ENCODE measurements at regions of chr2 and their contacts with region 1.

Region 1: GRCh38 chr2:218269899-218270720 is at the starts of genes AAMP and PNKD:
- DNase-seq: peak; percentile 100
- H3K4me3 Mint-ChIP-seq: peak within 1 kb of the TSS; percentile 99
- H3K27ac Mint-ChIP-seq: peak within 1 kb of the TSS; percentile 96
- H3K4me1 Mint-ChIP-seq: peaks cover 39% of the 10 kb centered on the region
- H3K27me3 Mint-ChIP-seq: peaks cover 2% of the 10 kb centered on the region
- total RNA-seq, gene AAMP: 85.3 and 89.0 TPM in 2 replicates
- total RNA-seq, gene PNKD: 15.0 and 21.5 TPM in 2 replicates

Region 2: DNA sequence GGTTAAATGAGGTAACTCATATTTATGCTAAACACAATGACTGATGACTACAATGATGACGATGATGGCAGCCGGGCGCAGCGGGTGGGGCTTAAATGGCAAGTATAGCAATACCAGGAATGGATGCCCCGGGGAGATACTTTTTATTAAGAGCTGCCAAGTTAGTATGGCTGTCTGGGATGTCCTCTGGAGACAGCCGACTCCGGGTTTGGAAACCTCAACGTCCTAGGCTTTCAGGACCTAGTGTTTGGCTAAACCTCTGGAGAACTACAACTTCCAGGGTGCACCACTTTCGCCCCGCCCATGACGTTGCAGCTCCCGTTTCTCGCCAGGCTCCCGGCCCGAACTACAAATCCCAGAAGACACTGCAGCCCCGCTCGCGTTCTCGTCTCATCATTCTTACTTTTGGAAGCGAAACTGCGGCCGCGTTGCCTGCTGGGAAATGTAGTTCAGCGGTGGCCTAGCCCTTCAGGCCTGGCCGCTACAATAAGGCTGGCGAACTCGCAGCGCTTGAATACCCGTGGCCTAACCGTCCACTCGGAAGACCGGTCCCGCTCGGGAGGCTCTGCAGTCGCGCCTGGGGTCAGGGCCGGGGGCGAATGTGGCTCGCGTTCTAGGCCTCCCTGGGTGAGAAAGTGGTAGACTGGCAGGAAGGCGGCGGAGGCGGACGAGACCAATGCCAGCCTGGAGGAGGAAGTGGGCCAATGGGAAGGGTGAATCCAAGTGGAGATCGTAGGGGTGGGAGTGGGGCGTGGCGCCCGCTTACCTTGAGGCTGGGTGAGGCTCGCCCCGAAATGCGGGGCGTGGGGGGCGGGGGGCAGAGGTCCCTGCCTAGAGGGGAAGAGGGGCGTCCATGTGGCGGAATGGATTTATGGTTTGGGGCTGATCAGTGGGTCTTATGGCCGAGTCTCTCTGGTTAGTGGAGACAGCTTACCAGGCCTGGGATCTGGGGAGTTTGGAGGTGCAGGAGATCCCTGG is 1857.8 kb before region 1 on chr2 and contains the start of gene SMARCAL1:
- intact Hi-C with region 1: loop called (anchors 10 kb)
- DNase-seq: peak; percentile 99
- H3K4me3 Mint-ChIP-seq: peak within 1 kb of the TSS; percentile 100
- H3K27ac Mint-ChIP-seq: peak within 1 kb of the TSS; percentile 96
- H3K4me1 Mint-ChIP-seq: peaks cover 16% of the 10 kb centered on the region
- H3K27me3 Mint-ChIP-seq: peaks cover 11% of the 10 kb centered on the region
- total RNA-seq, gene SMARCAL1: 27.4 and 29.0 TPM in 2 replicates

Region 3: DNA sequence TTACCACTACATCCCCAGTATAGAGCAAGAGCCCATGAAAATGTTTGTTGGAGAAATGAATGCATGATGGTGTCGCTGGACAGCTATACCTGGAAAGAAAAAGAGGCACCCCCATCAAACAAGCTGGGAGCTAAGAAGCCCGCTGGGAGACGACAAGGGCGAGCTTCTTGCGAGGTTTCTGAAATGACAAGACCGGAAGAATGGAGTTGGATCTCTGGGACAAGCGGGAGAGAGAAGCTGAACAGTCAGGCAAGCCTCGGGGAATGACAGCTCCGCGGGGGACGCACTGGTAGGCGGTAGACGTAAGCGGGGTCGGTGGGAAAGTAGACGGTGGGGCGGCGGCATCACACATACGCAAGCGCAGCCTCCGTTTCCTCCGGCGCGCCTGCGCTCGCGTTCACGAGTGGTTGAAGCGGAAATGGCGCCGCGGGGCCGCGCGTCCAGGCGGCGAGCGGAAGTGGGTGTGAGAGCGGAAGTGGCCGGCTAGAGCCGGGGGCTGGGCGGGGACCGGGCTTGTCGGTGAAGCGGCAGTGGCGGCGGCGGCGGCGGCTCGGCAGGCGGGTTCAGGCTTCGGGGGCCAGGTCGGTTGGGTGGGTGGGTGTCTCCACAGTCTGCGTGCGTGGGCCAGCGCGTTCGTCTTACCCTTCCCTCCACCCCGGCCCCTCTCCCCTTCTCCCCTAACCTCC is 53.3 kb before region 1 on chr2 and contains the start of gene ARPC2:
- intact Hi-C with region 1: loop called (anchors 1 kb)
- DNase-seq: peak; percentile 99
- H3K4me3 Mint-ChIP-seq: peak within 1 kb of the TSS; percentile 89
- H3K27ac Mint-ChIP-seq: peak within 1 kb of the TSS; percentile 94
- H3K4me1 Mint-ChIP-seq: peaks cover 37% of the 10 kb centered on the region
- H3K27me3 Mint-ChIP-seq: peaks cover 4% of the 10 kb centered on the region
- total RNA-seq, gene ARPC2: 515 and 516 TPM in 2 replicates

Region 4: GRCh38 chr2:218286570-218287459 is 16.7 kb after region 1 on chr2:
- intact Hi-C with region 1: loop called (anchors 1 kb)
- DNase-seq: peak; percentile 95
- H3K4me3 Mint-ChIP-seq: peak overlapping the region; percentile 86
- H3K27ac Mint-ChIP-seq: peak overlapping the region; percentile 92
- H3K4me1 Mint-ChIP-seq: peaks cover 67% of the 10 kb centered on the region
- H3K27me3 Mint-ChIP-seq: no peaks in the 10 kb centered on the region

Region 5: DNA sequence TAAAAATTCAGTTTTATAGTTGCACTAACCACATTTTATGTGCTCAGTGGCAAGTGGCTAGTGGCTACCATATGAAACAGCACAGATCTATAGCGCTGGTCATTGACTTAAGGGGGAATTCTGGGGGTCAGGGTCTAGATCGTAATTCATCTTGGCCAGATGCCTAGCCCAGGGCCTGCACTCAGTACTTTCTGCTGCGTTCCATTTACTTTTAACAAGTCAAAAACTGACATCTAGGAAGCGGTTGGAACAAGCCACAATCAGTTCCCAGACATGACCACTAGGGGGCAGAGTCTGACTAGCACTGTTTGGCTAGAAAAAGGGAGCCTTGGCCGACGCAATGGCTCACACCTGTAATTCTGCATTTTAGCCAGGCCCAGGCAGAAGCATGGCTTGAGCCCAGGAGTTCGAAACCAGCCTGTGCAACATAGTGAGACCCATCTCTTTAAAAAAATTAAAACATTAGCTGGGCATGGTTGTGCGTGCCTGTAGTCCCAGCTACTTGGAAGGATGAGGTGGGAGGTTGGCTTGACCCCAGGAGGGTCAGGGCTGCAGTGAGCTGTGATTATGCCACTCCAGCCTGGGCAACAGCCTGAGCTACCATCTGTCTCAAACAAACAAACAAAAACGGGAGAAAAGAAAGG is 31.2 kb after region 1 on chr2:
- intact Hi-C with region 1: no loop called
- DNase-seq: peak; percentile 97
- H3K4me3 Mint-ChIP-seq: no peak overlapping the region
- H3K27ac Mint-ChIP-seq: no peak overlapping the region
- H3K4me1 Mint-ChIP-seq: peaks cover 5% of the 10 kb centered on the region
- H3K27me3 Mint-ChIP-seq: no peaks in the 10 kb centered on the region

Region 6: GRCh38 chr2:218357236-218358159 is 87.4 kb after region 1 on chr2:
- intact Hi-C with region 1: loop called (anchors 2 kb)
- DNase-seq: no peak
- H3K4me3 Mint-ChIP-seq: no peak overlapping the region
- H3K27ac Mint-ChIP-seq: no peak overlapping the region
- H3K4me1 Mint-ChIP-seq: no peaks in the 10 kb centered on the region
- H3K27me3 Mint-ChIP-seq: peaks cover 2% of the 10 kb centered on the region

Region 7: DNA sequence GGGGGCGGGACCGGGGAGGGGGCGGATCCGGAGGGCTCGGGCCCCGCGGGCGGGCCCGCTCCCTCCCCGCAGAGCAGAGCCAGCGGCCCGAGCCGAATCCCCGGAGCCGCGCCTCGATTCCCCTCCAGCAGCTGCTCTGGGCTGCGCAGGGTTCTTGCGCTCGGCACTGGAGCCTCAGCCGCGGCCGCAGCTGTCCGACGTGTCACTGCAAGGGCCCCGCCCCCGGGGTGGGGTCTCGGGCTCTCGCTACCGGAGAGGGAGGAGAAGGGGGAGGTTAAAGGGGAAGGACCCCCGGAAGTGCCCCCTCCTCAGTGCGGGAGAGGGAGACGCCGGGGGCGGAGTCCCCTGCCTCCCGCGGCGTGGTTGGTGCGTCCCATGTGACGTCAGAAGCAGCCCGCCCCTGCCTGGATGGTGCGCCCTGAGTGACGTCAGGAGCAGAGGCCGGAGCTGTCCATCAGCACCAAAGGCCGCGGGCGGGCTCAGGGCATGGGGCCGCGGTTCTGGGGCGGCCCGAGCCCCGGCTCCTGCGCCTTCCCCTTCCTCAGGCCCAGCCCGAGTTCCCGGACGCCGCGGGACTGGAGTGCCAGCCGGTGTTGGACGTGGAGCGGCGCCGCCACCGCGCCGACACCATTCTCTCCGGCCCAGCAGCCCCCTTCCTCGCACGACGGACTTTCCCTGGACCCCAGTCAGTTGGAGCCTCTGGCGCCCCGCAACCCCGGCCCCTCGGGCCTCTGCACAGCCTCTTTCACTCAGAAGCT is 1273.7 kb after region 1 on chr2 and contains the starts of genes CHPF and TMEM198:
- intact Hi-C with region 1: loop called (anchors 5 kb)
- DNase-seq: peak; percentile 99
- H3K4me3 Mint-ChIP-seq: peak within 1 kb of the TSS; percentile 89
- H3K27ac Mint-ChIP-seq: peak within 1 kb of the TSS; percentile 75
- H3K4me1 Mint-ChIP-seq: peaks cover 17% of the 10 kb centered on the region
- H3K27me3 Mint-ChIP-seq: peaks cover 18% of the 10 kb centered on the region
- total RNA-seq, gene CHPF: 37.8 and 38.3 TPM in 2 replicates
- total RNA-seq, gene TMEM198: 3.1 and 3.4 TPM in 2 replicates